ENCODE measurements at regions of chr7 and their contacts with region 1.

Region 1: GRCh38 chr7:55593515-55594318 is 21.4 kb upstream of the VOPP1 start:
- DNase-seq: no peak
- H3K4me3 ChIP-seq: no peak overlapping the region
- CTCF ChIP-seq: peak; percentile 83

Region 2: GRCh38 chr7:55335151-55335550 is 258.6 kb before region 1 on chr7:
- CTCF ChIA-PET with region 1: no interaction called
- POLR2A ChIA-PET with region 1: no interaction called
- DNase-seq: no peak
- H3K4me3 ChIP-seq: no peak overlapping the region
- CTCF ChIP-seq: no peak

Region 3: GRCh38 chr7:55348499-55348898 is 245.2 kb before region 1 on chr7:
- CTCF ChIA-PET with region 1: no interaction called
- POLR2A ChIA-PET with region 1: no interaction called
- DNase-seq: no peak
- H3K4me3 ChIP-seq: no peak overlapping the region
- CTCF ChIP-seq: no peak

Region 4: GRCh38 chr7:55432939-55433784 is 160.6 kb before region 1 on chr7:
- CTCF ChIA-PET with region 1: interaction called, 12 read pairs
- POLR2A ChIA-PET with region 1: no interaction called
- DNase-seq: no peak
- H3K4me3 ChIP-seq: no peak overlapping the region
- CTCF ChIP-seq: peak; percentile 39

Region 5: DNA sequence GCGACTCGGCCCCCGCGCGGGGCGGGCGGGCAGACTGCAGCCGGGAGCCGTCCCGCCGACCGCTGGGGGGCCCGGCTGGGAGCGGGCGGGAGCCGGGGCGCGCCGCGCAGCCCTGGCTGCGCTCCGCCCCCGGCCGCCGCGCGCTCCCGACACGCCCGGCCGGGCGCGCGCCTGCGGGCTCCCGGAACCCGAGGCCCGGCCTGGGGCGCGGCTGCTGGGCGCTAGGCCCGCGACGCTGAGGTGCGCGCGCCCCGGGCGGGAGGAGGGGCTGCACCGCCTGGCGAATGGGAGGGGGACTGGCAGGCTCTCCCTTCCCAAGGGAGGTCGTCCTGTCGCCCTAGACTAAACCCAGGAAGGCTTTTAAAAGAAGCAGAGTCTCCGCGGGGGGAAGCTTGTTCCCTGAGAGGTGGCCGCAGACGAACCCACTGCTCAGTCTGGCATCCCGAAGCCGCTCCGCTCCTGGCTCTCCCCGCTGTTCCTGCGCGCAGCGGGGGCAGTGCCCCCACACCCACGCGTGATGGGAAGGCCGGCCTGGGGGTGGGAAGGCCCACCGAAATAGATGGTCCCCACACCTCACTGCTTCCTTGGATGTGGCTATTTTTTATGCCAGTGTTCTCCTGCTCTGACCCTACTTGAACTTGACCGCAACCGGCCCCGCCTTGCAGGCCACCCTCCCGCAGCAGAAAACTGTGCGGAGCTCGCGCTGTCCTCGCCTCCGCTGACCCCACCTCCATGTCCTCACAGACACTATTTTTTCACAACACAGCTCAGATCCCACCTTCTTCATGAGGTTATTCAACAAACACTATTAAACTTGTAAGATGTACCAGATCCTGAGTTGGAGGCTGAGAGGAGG is 21.1 kb before region 1 on chr7 and contains the start of gene VOPP1:
- CTCF ChIA-PET with region 1: interaction called, 11 read pairs
- POLR2A ChIA-PET with region 1: no interaction called
- DNase-seq: no peak
- H3K4me3 ChIP-seq: peak within 1 kb of the TSS; percentile 81
- CTCF ChIP-seq: no peak

Region 6: GRCh38 chr7:55622241-55622640 is 28.5 kb after region 1 on chr7:
- CTCF ChIA-PET with region 1: no interaction called
- POLR2A ChIA-PET with region 1: no interaction called
- DNase-seq: no peak
- H3K4me3 ChIP-seq: no peak overlapping the region
- CTCF ChIP-seq: no peak